Activated CD4-positive, alpha-beta memory T cell treated with anti-CD3 and anti-CD28 coated beads for 36 hours (primary cell): ENCODE measurements at regions of chr3 and their contacts with region 1.

Region 1: DNA sequence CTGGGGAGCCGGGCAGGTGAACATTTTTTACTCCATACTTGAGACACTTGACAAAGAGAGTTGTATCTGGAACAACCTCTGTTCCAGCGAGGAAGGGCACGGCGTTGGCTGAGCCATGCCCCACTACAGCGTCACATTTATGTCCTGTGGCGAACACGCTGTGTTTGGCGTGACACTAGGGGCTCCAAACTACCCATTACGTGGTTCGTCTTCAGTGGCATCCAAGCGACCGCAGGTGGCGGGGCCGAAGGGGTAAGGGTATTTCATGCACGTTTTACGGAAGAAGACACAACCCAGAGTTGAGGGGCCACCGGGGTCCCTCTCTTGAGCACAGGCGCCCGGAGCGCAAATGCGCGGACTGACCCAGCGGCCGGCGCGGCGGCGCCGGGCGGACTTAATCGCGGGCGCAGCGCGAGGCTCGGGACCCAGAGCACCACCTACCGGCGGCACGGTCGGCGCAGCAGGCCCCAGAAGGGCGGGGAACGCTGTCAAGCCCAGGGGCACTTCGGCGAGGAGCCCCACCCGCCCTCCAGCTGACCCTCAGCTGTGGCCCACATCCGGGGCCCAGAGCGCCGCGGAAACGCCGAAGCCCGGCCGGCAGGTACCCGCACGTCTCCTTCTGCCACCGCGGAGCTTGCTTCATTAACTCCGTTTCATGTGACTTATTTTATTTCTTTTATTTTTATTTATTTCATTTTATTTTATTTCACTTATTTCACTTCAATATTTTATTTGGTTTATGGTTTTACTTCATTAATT is 36.4 kb upstream of the TRIM71 start:
- DNase-seq: peak; percentile 80
- H3K4me3 Mint-ChIP-seq: peak overlapping the region; percentile 83
- H3K27ac Mint-ChIP-seq: no peak overlapping the region
- H3K4me1 Mint-ChIP-seq: peaks cover 10% of the 10 kb centered on the region
- H3K27me3 Mint-ChIP-seq: peaks cover 13% of the 10 kb centered on the region

Region 2: GRCh38 chr3:32510075-32510724 is 271.2 kb before region 1 on chr3:
- CTCF ChIA-PET with region 1: no interaction called
- POLR2A ChIA-PET with region 1: no interaction called
- intact Hi-C with region 1: loop called (anchors 1 kb)
- DNase-seq: peak; percentile 78
- H3K4me3 Mint-ChIP-seq: no peak overlapping the region
- H3K27ac Mint-ChIP-seq: no peak overlapping the region
- H3K4me1 Mint-ChIP-seq: no peaks in the 10 kb centered on the region
- H3K27me3 Mint-ChIP-seq: no peaks in the 10 kb centered on the region

Region 3: DNA sequence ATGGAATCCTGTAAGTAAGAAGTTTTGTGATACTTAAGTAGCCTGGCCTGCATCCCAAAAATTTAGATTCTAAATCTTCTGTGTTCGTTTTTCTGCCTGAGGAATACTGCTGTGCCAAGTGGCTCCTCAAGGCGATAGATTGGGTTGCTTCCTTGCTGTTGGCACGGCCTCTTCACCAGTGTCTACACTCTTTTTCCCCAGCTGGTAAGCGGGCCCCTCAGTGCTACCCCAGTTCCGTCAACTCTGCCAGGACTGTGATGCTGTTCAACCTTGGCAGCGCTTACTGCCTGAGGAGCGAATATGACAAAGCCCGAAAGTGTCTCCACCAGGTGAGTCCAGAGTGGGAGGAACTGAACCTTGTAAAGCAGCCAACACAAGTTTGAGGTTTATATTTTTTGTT is 16.9 kb before region 1 on chr3:
- CTCF ChIA-PET with region 1: no interaction called
- POLR2A ChIA-PET with region 1: no interaction called
- intact Hi-C with region 1: no loop called
- DNase-seq: no peak
- H3K4me3 Mint-ChIP-seq: no peak overlapping the region
- H3K27ac Mint-ChIP-seq: no peak overlapping the region
- H3K4me1 Mint-ChIP-seq: no peaks in the 10 kb centered on the region
- H3K27me3 Mint-ChIP-seq: no peaks in the 10 kb centered on the region

Region 4: DNA sequence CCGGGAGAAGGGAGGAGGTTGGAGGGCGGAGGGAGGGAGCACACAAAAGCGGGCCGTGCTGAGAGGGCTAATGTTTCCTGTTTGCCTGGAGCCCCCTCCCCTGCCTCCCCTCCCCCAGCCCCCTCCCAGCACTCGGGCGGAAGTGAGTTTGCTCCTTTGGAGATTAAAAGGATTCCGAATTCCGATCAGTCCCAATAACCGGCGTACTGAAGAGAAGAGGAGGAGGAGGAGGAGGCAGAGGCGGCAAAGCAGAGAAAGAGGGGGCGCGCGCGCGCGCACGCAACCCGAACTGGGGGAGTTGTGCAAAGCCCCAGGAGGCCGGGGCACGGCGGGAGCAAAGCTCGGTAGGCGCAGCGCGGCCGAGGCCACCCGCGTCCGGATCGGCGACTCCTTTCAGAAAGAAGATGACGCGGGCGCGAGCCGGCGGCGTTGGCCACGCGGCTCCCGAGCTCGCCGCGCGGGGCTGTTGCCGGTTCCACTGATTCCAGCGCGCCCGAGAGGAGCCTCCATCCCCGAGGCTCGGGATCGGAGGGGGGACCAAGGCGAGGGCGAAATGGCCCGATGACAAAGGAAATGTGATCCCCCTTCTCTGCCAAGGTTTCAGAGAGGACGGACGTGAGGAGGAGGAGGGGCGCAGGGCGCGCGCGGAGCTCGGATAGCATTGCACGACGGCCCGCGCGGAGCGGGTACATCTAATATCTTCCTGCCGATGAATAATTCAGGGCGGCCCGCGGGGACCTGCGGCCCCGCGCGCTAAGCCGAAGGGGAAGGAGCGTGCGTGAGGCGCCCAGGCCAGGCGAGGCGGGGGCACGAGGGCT is 35.3 kb after region 1 on chr3:
- CTCF ChIA-PET with region 1: no interaction called
- POLR2A ChIA-PET with region 1: no interaction called
- intact Hi-C with region 1: loop called (anchors 5 kb)
- DNase-seq: peak; percentile 32
- H3K4me3 Mint-ChIP-seq: peak overlapping the region; percentile 62
- H3K27ac Mint-ChIP-seq: no peak overlapping the region
- H3K4me1 Mint-ChIP-seq: peaks cover 25% of the 10 kb centered on the region
- H3K27me3 Mint-ChIP-seq: peaks cover 46% of the 10 kb centered on the region

Region 5: DNA sequence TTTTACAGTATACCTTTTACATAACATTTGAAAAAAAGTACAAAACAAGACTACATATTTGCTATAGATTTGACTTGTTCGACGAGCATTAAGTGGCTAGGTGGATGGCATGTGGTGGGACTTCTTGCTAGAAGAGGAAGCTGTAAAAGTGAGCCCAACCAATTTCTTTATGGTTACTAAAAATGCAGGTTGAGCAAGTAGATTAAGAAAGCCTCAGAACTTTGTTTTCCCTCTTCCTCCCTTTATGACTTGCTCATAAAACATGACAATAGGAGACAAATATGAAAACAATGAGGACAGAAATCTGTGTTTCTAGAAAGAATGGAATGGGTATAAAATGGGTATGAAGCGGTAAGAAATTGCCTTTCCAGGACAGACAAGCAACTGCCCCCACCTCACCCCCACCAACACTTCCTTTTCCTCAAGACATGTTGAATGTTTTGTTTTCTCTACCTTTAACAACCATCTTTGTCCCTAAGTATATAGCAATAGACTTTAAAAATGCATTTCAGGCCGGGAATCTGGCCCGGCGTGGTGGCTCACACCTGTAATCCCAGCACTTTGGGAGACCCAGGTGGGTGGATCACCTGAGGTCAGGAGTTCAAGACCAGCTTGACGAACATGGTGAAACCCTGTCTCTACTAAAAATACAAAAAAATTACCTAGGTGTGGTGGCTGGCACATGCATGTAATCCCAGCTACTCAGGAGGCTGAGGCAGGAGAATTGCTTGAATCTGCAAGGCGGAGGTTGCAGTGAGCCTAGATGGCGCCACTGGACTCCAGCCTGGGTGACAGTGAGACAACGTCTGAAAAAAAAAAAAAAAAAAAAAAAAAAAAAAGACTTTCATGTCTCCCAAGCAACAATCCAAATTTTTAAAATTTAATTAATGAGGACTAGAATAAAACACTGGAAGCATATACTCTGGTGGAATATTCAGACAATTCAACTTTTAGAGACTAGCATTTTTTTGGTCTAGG is 120.3 kb after region 1 on chr3:
- CTCF ChIA-PET with region 1: interaction called, 6 read pairs
- POLR2A ChIA-PET with region 1: no interaction called
- intact Hi-C with region 1: loop called (anchors 1 kb)
- DNase-seq: peak; percentile 64
- H3K4me3 Mint-ChIP-seq: no peak overlapping the region
- H3K27ac Mint-ChIP-seq: no peak overlapping the region
- H3K4me1 Mint-ChIP-seq: peaks cover 3% of the 10 kb centered on the region
- H3K27me3 Mint-ChIP-seq: peaks cover 19% of the 10 kb centered on the region

Region 6: GRCh38 chr3:32934150-32934742 is 152.9 kb after region 1 on chr3:
- CTCF ChIA-PET with region 1: no interaction called
- POLR2A ChIA-PET with region 1: no interaction called
- intact Hi-C with region 1: loop called (anchors 1 kb)
- DNase-seq: peak; percentile 39
- H3K4me3 Mint-ChIP-seq: no peak overlapping the region
- H3K27ac Mint-ChIP-seq: no peak overlapping the region
- H3K4me1 Mint-ChIP-seq: no peaks in the 10 kb centered on the region
- H3K27me3 Mint-ChIP-seq: peaks cover 2% of the 10 kb centered on the region